A673 (cell line): ENCODE measurements at regions of chr16 and their contacts with region 1.

Region 1: DNA sequence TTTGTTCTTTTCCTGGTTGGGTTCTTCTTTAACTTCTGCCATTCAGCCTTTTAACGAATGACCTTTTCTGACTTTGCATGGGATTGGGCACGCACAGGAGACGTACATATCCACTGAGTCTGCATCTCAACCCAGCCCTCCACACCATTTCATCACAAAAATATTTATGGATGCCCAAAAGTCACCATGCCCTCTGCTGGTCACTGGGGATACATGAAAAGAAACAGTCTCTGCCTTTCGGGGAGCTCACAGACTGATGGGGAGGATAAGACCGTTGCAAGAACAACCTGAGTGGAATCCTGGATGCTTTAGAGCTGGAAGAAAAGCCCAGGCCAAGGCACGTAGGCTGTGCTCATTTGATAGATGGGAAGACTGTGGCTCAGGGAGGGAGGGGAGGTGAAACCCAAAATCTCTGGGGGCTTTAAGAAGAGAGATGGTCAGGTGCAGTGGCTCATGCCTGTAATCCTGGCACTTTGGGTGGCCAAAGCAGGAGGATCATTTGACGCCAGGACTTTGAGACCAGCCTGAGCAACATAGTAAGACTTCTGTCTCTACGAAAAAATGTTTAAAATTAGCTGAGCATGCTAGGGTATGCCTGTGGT is 7.9 kb upstream of the MT2A start:
- DNase-seq: peak; percentile 69
- H3K4me3 ChIP-seq: no peak overlapping the region
- H3K27ac ChIP-seq: no peak overlapping the region
- H3K4me1 ChIP-seq: no peaks in the 10 kb centered on the region
- H3K27me3 ChIP-seq: no peaks in the 10 kb centered on the region
- CTCF ChIP-seq: peak; percentile 77

Region 2: GRCh38 chr16:55107851-55108250 is 1492.6 kb before region 1 on chr16:
- CTCF ChIA-PET with region 1: no interaction called
- POLR2A ChIA-PET with region 1: no interaction called
- intact Hi-C with region 1: no loop called
- DNase-seq: no peak
- H3K4me3 ChIP-seq: no peak overlapping the region
- H3K27ac ChIP-seq: no peak overlapping the region
- H3K4me1 ChIP-seq: no peaks in the 10 kb centered on the region
- H3K27me3 ChIP-seq: no peaks in the 10 kb centered on the region
- CTCF ChIP-seq: no peak

Region 3: GRCh38 chr16:56513972-56514371 is 86.5 kb before region 1 on chr16:
- CTCF ChIA-PET with region 1: no interaction called
- POLR2A ChIA-PET with region 1: no interaction called
- intact Hi-C with region 1: loop called (anchors 1 kb)
- DNase-seq: peak; percentile 68
- H3K4me3 ChIP-seq: no peak overlapping the region
- H3K27ac ChIP-seq: no peak overlapping the region
- H3K4me1 ChIP-seq: no peaks in the 10 kb centered on the region
- H3K27me3 ChIP-seq: no peaks in the 10 kb centered on the region
- CTCF ChIP-seq: peak; percentile 74